Activated CD8-positive, alpha-beta T cell treated with anti-CD3 and anti-CD28 coated beads for 36 hours (primary cell): ENCODE measurements at regions of chr4 and their contacts with region 1.

Region 1: DNA sequence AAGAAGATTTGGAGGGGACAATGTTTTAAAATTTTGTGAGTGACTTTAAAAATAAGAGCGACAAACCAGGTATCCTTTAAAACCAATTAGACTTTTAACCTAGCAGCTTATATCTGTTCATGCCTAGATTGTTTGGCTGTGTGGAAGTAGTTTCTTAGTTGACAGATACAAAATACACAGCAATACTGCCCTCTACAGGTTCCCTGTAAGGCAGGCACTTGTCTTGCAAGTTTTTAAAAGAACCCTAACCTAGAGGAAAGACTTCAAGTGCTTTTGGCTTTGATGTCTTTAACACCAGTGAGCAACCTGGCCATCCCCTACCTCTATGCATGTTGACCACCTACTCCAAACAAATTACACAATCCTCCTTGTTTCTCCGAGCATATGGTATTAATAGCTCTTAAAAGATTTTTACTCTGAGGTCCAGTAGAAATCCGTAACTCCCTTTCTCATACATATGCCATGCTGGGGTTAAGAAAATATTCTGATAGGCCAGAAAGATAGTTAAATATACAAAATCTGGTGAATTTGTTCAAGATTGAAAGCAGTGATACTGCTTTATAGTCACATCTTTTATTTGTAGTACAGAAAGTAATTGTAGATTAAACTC is 273.0 kb downstream of the ARHGAP24 start:
- DNase-seq: peak; percentile 16
- ATAC-seq: peak; percentile 55
- H3K4me3 Mint-ChIP-seq: no peak overlapping the region
- H3K27ac Mint-ChIP-seq: no peak overlapping the region
- H3K4me1 Mint-ChIP-seq: no peaks in the 10 kb centered on the region
- H3K27me3 Mint-ChIP-seq: no peaks in the 10 kb centered on the region
- CTCF ChIP-seq: peak; percentile 71

Region 2: DNA sequence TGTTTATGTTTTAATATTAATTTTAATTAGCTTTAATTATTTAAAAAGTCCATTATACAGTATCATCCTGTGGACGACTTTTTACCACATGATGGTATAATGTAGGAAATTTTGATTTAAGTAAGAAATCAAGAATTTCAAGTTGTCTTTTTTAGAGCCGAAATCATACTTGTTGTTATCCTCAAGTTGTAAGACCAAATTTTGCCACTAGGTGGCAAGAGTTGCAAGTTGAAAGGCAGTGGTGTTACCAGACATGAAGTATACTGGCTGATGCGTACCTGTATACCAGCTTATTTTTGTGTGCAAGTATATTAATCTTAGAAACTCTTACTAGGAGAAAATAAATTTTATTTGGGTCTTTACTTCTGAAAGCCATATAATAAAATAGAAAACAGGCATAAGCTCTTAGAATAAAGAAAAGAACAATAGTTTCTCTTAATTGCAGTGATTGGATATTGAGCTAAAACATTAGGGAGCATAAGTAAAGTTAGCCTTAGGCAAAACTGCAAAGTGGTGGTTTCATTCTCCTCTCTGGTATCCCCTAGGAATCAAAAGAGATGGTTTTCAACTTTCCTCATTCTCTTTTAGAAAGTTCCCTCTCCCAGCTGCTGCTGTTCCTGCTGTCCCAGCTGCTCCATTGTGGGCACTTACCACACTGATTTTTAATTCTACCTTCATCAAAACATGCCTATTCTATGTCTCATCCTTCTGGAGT is 663.5 kb before region 1 on chr4:
- CTCF ChIA-PET with region 1: interaction called, 5 read pairs
- POLR2A ChIA-PET with region 1: no interaction called
- intact Hi-C with region 1: loop called (anchors 10 kb)
- DNase-seq: peak; percentile 30
- ATAC-seq: no peak
- H3K4me3 Mint-ChIP-seq: no peak overlapping the region
- H3K27ac Mint-ChIP-seq: no peak overlapping the region
- H3K4me1 Mint-ChIP-seq: no peaks in the 10 kb centered on the region
- H3K27me3 Mint-ChIP-seq: peaks cover 2% of the 10 kb centered on the region
- CTCF ChIP-seq: peak; percentile 57

Region 3: GRCh38 chr4:85147439-85148076 is 600.4 kb before region 1 on chr4:
- CTCF ChIA-PET with region 1: interaction called, 6 read pairs
- POLR2A ChIA-PET with region 1: no interaction called
- intact Hi-C with region 1: loop called (anchors 5 kb)
- DNase-seq: peak; percentile 30
- ATAC-seq: no peak
- H3K4me3 Mint-ChIP-seq: no peak overlapping the region
- H3K27ac Mint-ChIP-seq: no peak overlapping the region
- H3K4me1 Mint-ChIP-seq: no peaks in the 10 kb centered on the region
- H3K27me3 Mint-ChIP-seq: peaks cover 3% of the 10 kb centered on the region
- CTCF ChIP-seq: peak; percentile 52